Activated naive CD8-positive, alpha-beta T cell treated with anti-CD3 and anti-CD28 coated beads, Interleukin-2, amount 10 ng/mL, durations not matched to agents 7 days and 5 days (primary cell): ENCODE measurements at regions of chr16 and their contacts with region 1.

Region 1: GRCh38 chr16:4693296-4693955 is at the start of gene NUDT16L1:
- DNase-seq: peak; percentile 100
- ATAC-seq: peak; percentile 91
- H3K4me3 Mint-ChIP-seq: peak within 1 kb of the TSS; percentile 82
- H3K27ac Mint-ChIP-seq: peak within 1 kb of the TSS; percentile 83
- H3K4me1 Mint-ChIP-seq: peaks cover 12% of the 10 kb centered on the region
- H3K27me3 Mint-ChIP-seq: no peaks in the 10 kb centered on the region
- total RNA-seq, gene NUDT16L1: 40.7 to 42.7 TPM

Region 2: DNA sequence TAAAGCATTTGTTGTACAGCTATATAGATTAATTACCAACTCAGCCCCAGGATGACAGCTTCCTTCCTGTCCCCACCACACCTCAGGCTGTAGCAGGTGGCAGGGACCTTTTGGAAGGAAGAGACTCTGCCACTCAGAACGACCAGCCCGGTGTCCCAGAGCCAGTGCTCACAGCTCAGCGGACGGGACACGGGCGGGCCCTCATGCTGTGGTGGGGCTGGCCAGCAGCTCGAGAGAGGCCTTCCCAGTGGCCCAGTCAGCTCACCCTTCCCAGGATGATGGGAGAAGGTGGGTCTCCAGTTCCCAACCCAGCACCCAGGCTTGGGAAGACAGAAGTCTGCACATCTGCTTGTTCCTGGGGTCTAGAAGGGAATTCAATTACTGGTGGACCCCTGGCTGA is 10.5 kb after region 1 on chr16:
- POLR2A ChIA-PET with region 1: interaction called, 12 read pairs
- DNase-seq: no peak
- ATAC-seq: no peak
- H3K4me3 Mint-ChIP-seq: no peak overlapping the region
- H3K27ac Mint-ChIP-seq: no peak overlapping the region
- H3K4me1 Mint-ChIP-seq: peaks cover 26% of the 10 kb centered on the region
- H3K27me3 Mint-ChIP-seq: no peaks in the 10 kb centered on the region

Region 3: DNA sequence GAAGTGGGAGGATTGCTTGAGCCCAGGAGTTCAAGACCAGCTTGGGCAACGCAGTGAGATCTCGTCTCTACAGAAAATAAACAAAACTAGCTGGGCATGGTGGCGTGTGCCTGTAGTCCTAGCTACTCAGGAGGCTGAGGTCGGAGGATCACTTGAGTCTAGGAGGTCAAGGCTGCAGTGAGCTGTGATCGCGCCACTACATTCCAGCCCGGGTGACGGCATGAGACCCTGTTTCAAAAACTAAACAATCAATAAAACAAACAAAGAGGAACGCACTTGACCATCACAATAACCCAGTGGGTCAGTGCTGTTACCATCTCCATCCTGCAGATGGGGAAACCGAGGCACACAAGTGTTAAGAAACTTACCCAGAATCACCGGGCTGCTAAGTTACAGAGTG is 59.8 kb after region 1 on chr16:
- POLR2A ChIA-PET with region 1: no interaction called
- DNase-seq: no peak
- ATAC-seq: no peak
- H3K4me3 Mint-ChIP-seq: no peak overlapping the region
- H3K27ac Mint-ChIP-seq: no peak overlapping the region
- H3K4me1 Mint-ChIP-seq: peaks cover 6% of the 10 kb centered on the region
- H3K27me3 Mint-ChIP-seq: no peaks in the 10 kb centered on the region